Aorta (tissue), 5 donors: ENCODE measurements at regions of chr20 and their contacts with region 1.

Region 1: DNA sequence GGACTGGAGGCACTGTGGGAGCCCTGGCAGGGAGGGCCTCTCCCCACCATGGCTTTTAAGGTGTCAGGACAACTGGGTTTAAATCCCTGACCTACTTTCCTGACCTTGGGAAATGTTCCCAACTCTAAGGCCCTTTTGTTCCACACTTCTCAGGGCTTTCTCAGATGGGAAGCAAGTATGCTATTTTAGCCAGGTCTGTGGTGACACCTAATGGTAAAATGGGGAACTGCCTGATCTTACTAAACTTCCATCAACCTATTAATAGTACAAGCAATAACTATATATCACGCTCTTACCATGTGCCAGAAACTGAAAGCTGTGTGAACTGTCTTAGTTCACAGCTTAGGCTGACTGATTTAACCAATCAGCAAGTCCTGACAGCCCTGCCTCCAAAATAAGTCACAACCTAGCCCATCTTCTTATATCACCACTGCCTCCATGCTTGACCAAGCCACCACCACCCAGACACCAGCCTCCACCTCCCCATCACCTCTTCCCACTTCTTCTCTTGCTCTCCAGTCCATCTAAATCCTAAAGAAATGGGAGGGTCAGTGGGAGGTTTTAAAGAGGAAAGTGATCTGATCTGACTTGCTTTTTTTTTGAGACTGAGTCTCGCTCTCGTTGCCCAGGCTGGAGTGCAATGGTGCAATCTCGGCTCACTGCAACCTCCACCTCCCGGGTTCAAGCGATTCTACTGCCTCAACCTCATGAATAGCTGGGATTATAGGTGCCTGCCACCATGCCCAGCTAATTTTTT is 6.9 kb upstream of the BLCAP start:
- DNase-seq: no peak
- ATAC-seq: peak; percentile 87
- H3K4me3 ChIP-seq: no peak overlapping the region
- H3K27ac ChIP-seq: no peak overlapping the region
- H3K4me1 ChIP-seq: no peaks in the 10 kb centered on the region
- H3K27me3 ChIP-seq: no peaks in the 10 kb centered on the region

Region 2: DNA sequence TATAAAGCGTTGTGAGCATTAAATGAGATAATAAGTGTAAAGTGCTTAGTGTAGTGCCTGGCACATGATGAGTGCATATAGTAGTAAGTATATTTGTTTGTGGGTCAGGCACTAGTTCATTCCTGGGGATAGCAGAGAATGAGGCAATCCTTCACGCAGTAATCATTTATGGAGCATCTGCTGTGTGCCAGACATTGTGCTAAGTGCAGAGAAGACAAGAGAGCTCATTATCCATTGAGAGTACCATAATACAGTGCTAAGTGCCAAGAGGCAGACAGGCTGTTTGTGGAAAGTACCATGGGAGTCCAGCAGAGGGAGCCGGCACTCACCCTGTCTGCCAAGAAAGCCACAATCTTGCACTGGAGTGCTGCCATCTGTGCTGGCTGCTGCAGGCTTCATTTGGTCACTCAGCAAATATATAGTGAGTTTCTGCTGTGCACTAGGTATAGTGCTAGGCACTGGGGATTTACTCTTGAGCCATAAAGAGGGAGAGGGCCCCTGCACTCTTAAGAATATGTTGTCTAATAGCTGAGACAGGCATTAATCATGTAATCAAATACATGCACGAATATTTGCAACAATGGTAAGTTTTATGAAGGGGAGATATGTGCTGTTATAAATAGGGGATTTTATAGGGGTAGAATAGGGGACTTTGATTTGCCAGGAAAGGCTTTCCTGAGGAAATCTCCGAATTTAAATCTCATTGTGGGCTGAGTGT is 342.3 kb before region 1 on chr20:
- intact Hi-C with region 1: loop called (anchors 5 kb)
- DNase-seq: peak; percentile 93
- ATAC-seq: peak; percentile 94
- H3K4me3 ChIP-seq: no peak overlapping the region
- H3K27ac ChIP-seq: no peak overlapping the region
- H3K4me1 ChIP-seq: no peaks in the 10 kb centered on the region
- H3K27me3 ChIP-seq: no peaks in the 10 kb centered on the region

Region 3: GRCh38 chr20:37265152-37265551 is 269.4 kb before region 1 on chr20:
- intact Hi-C with region 1: loop called (anchors 1 to 2 kb)
- DNase-seq: peak in 1 of 2 donors; percentile 11
- ATAC-seq: no peak
- H3K4me3 ChIP-seq: no peak overlapping the region
- H3K27ac ChIP-seq: no peak overlapping the region
- H3K4me1 ChIP-seq: no peaks in the 10 kb centered on the region
- H3K27me3 ChIP-seq: no peaks in the 10 kb centered on the region

Region 4: DNA sequence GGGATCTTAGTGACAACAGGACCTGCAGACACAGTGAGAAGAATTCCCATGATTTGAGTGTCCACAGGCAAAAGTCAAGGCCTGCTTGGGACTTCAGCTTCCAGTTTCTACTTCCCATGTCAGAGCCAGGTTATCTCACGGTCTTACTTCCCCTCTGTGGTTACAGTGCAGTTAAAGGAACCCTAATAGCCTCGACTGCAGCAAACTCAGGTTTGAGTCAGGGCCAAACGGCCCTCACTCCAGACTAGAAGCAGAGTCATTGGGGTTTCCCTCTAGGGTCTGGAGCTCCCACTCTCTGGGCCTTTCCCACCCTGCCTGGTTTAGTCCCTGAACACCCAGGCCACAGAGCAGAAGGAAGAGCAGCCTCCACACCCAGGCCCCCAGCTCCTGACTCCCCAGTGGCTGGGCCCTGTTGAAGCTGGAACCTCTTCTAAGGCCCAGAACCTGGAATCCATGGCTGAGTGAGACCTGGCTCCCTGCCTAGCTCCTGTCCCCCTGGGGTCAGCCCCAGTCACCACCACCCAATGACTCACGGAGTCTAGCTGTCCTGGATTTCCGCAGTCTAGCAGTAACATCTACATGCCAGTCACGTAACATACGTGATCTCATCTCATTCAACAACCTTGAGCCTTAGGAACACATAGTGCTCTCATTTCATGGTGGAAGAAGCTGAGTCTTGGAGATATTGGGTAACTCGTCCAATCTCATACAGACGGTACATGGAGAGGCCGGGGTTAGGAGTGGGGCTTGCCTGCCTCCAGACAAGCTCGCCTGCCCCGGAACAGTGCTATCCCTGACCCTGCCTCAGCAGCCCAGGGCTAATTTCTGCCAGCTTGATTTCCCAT is 263.8 kb before region 1 on chr20:
- intact Hi-C with region 1: loop called (anchors 1 to 2 kb)
- DNase-seq: peak; percentile 54 to 62
- ATAC-seq: peak; percentile 56
- H3K4me3 ChIP-seq: no peak overlapping the region
- H3K27ac ChIP-seq: no peak overlapping the region
- H3K4me1 ChIP-seq: no peaks in the 10 kb centered on the region
- H3K27me3 ChIP-seq: no peaks in the 10 kb centered on the region

Region 5: GRCh38 chr20:37392421-37393178 is 142.0 kb before region 1 on chr20:
- intact Hi-C with region 1: loop called (anchors 5 kb)
- DNase-seq: peak; percentile 33 to 60
- ATAC-seq: no peak
- H3K4me3 ChIP-seq: no peak overlapping the region
- H3K27ac ChIP-seq: no peak overlapping the region
- H3K4me1 ChIP-seq: no peaks in the 10 kb centered on the region
- H3K27me3 ChIP-seq: no peaks in the 10 kb centered on the region

Region 6: GRCh38 chr20:37480919-37481318 is 53.7 kb before region 1 on chr20:
- intact Hi-C with region 1: no loop called
- DNase-seq: no peak
- ATAC-seq: peak; percentile 69
- H3K4me3 ChIP-seq: no peak overlapping the region
- H3K27ac ChIP-seq: no peak overlapping the region
- H3K4me1 ChIP-seq: no peaks in the 10 kb centered on the region
- H3K27me3 ChIP-seq: no peaks in the 10 kb centered on the region